ENCODE measurements at regions of chr14 and their contacts with region 1.

Region 1: DNA sequence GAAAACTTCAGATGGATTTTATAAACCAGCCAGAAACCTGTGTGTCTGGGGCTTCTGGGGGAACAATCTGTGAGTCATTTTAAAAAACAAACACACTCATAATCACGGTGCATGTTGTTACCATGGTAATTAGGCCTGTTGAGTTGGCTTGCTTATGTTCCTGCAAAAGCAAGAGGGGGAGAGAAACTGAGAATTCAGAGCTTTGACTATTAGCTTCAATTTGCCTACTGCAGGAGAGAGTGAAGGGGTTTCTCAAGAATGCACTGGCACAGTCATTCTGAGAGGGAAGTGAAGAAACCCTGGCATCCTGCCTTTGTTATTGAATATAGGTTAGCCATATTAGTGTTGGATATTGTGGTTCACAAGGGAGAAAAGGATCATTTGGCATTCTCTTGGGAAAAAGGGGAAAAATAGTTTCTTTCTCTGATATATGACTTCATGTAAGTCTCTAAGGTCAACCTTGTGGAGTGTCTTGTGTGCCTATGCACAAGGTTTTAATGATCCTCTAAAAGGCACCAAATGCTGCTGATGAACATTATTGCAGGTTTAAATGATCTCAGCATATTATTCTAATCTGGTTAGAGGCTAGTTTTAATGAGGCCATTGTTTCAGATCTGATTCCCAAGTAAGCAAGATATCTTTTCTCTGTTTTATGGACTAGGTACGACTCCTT is 12.9 kb downstream of the GNG2 start:
- DNase-seq: peak; percentile 94
- ATAC-seq: peak; percentile 85
- H3K4me3 ChIP-seq: no peak overlapping the region
- H3K27ac ChIP-seq: peak overlapping the region; percentile 50
- H3K4me1 ChIP-seq: peaks cover 42% of the 10 kb centered on the region
- H3K27me3 ChIP-seq: no peaks in the 10 kb centered on the region
- CTCF ChIP-seq: no peak
- EP300 ChIP-seq: peak; percentile 78 to 81; a peak in 3 of 4 replicates
- POLR2A ChIP-seq: no peak
- RAD21 ChIP-seq: peak; percentile 2; the same call in 1 of the 2 replicates

Region 2: GRCh38 chr14:51908086-51908485 is 34.7 kb after region 1 on chr14:
- CTCF ChIA-PET with region 1: no interaction called
- POLR2A ChIA-PET with region 1: no interaction called
- RAD21 ChIA-PET with region 1: no interaction called
- SMC1A ChIA-PET with region 1: interaction called, 3 read pairs
- in situ Hi-C with region 1: no loop called
- intact Hi-C with region 1: loop called (anchors 5 kb)
- DNase-seq: no peak
- ATAC-seq: no peak
- H3K4me3 ChIP-seq: no peak overlapping the region
- H3K27ac ChIP-seq: no peak overlapping the region
- H3K4me1 ChIP-seq: no peaks in the 10 kb centered on the region
- H3K27me3 ChIP-seq: no peaks in the 10 kb centered on the region
- CTCF ChIP-seq: no peak
- EP300 ChIP-seq: no peak
- POLR2A ChIP-seq: no peak
- RAD21 ChIP-seq: no peak

Measured in GM12878 (cell line).